ENCODE measurements at regions of chr1 and their contacts with region 1.

Region 1: DNA sequence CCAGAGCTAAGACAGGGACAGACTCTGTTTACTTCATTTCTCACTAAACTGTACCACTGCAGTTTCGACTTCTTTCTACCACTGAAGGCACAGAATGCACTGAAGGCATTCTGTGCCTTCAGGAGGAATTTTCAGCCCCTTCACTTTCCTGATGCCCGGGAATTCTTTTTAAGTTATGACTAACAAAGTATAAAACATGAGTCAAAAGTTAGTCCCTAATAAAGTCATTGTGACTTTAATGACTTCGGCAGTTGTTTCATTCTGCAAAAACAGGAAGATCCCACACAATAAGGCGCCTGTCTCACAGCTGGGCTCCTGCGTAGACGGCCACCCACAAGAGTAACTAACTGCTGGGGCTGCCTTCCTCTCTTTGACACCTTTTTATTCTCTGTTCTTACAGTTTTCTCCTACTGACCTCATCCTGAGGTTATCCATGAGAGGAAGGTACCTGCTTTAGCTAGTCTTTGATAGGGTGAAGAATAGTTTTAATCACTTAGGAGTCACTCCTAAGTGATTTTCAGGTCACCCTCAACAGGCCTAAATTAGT is 183.9 kb upstream of the SGIP1 start:
- DNase-seq: no peak
- H3K4me3 Mint-ChIP-seq: peak overlapping the region; percentile 75
- H3K27ac Mint-ChIP-seq: peak overlapping the region; percentile 81
- H3K4me1 Mint-ChIP-seq: peaks cover 90% of the 10 kb centered on the region
- H3K27me3 Mint-ChIP-seq: no peaks in the 10 kb centered on the region

Region 2: GRCh38 chr1:66182551-66183178 is 167.4 kb before region 1 on chr1:
- intact Hi-C with region 1: loop called (anchors 5 kb)
- DNase-seq: peak; percentile 33
- H3K4me3 Mint-ChIP-seq: peak overlapping the region; percentile 51
- H3K27ac Mint-ChIP-seq: peak overlapping the region; percentile 18
- H3K4me1 Mint-ChIP-seq: peaks cover 51% of the 10 kb centered on the region
- H3K27me3 Mint-ChIP-seq: peaks cover 2% of the 10 kb centered on the region

Region 3: GRCh38 chr1:66271216-66271903 is 78.7 kb before region 1 on chr1:
- intact Hi-C with region 1: loop called (anchors 1 kb)
- DNase-seq: no peak
- H3K4me3 Mint-ChIP-seq: peak overlapping the region; percentile 38
- H3K27ac Mint-ChIP-seq: peak overlapping the region; percentile 85
- H3K4me1 Mint-ChIP-seq: peaks cover 67% of the 10 kb centered on the region
- H3K27me3 Mint-ChIP-seq: peaks cover 2% of the 10 kb centered on the region

Region 4: DNA sequence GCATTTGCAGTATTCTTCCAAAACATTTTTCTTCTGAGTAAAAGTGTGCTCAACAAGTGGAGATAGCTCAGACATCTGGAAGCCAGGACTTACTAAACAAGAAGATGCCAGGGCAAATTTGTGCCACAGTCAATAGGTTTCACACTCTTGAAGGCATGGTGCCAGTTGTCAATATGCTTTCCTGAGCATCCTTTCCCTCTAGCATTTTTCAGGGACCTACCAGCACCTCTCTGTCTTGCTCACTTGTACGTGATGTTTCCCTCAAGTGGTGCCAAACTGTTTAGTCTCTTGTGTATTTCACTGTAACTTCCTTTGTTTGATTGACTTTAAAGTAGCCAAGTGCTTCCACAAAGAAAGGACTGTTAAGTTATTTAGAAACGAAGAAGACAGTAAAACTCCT is 10.1 kb before region 1 on chr1:
- intact Hi-C with region 1: loop called (anchors 1 kb)
- DNase-seq: no peak
- H3K4me3 Mint-ChIP-seq: peak overlapping the region; percentile 79
- H3K27ac Mint-ChIP-seq: peak overlapping the region; percentile 79
- H3K4me1 Mint-ChIP-seq: peaks cover 80% of the 10 kb centered on the region
- H3K27me3 Mint-ChIP-seq: no peaks in the 10 kb centered on the region

Region 5: DNA sequence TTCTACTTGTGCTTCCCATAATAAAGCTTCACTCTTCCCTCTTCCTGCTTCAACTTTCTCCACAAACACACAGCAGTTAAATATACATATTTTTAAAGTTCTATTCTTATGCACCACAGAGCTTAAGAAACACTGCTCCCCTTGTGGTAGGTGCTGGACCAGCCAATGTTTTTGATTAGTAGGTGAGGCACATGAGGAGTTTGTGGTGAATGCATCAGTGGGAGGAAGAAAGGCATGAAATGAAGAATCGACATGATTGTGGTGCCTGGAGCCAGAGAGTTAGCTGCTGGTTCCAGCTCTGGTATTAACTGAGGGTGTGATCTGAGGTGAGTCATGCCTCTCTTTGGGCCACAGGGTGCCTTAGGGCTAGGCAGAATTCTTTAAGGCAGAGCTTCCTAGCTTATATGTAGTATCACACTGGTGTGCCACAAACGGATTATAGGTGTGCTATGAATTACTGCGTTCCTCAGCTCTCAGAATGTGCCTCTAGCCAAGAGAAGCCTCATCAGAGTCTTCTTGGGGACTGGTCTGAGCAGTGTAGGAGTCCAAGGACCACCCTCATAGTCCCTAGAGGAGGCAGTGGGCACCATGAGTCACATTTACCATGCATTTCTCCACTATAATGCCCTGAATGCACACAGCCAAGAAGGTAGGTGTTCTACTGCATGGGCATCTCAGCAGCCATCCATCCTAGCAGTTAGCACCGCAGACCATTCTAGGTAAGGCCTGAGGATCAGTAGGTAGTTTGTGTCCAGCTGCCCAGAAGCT is 86.5 kb after region 1 on chr1:
- intact Hi-C with region 1: loop called (anchors 1 kb)
- DNase-seq: peak; percentile 34
- H3K4me3 Mint-ChIP-seq: no peak overlapping the region
- H3K27ac Mint-ChIP-seq: peak overlapping the region; percentile 2
- H3K4me1 Mint-ChIP-seq: peaks cover 45% of the 10 kb centered on the region
- H3K27me3 Mint-ChIP-seq: no peaks in the 10 kb centered on the region